ENCODE measurements at regions of chr2 and their contacts with region 1.

Region 1: DNA sequence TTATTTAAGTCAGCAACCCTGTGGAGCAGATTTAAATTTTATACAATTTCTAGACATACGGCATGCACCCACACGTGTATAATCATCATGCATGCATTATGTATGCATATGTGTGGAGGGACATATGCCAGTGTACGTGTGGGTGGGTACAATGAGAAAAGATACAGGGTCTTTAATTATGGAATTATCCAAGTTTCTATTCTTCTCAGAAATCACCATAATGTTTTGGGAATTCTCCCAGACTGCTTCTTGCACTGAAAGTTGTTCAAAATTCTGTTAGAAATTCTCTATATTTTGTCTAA is 63.9 kb upstream of the TMEM18 start:
- DNase-seq: no peak
- H3K4me3 ChIP-seq: peak overlapping the region; percentile 31 to 51 (median 47)
- H3K27ac ChIP-seq: no peak overlapping the region
- H3K4me1 ChIP-seq: peaks cover 6% of the 10 kb centered on the region
- H3K27me3 ChIP-seq: no peaks in the 10 kb centered on the region
- CTCF ChIP-seq: no peak

Region 2: DNA sequence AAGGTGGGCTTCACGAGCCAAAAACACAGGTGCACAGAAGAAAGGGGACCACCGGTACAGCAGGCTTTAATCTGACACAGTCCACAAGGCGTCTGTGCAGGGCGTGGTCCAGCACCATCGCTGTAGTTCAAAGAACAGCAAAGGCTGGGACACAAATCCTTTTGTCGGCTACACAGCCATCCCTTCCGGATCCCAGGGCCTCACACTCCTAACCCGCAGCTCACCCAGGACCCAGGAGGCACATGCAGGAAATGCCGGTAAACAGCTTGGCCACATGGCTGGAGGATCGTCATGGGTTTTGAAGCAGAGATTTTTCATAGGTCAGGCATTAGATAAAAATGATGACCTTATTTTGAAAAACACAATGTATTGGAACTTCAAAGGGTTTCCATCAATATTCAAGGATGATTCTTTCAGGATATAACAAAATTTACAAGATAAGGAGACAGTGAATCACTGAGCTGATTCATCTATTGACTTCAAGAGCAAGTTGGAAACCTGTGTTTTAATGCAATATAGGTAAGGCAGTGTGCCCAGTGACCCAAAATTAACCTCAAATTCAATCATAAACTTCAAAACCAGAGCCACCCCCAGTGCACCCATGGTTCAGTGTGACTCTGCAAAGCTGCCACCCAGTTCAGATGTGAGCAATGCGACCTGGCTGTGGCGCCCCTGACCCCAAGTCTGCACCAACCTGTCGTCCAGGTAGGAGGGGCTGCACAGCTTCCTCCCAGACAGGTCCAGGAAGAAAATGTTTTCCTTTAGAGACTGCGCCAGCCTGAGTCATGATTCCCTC is 138.4 kb before region 1 on chr2:
- CTCF ChIA-PET with region 1: no interaction called
- dilution Hi-C with region 1: no loop called
- in situ Hi-C with region 1: no loop called
- intact Hi-C with region 1: no loop called
- DNase-seq: no peak
- H3K4me3 ChIP-seq: no peak overlapping the region
- H3K27ac ChIP-seq: no peak overlapping the region
- H3K4me1 ChIP-seq: no peaks in the 10 kb centered on the region
- H3K27me3 ChIP-seq: no peaks in the 10 kb centered on the region
- CTCF ChIP-seq: no peak

Region 3: GRCh38 chr2:1324884-1325283 is 583.7 kb after region 1 on chr2:
- CTCF ChIA-PET with region 1: interaction called, 14 read pairs
- dilution Hi-C with region 1: no loop called
- in situ Hi-C with region 1: no loop called
- intact Hi-C with region 1: no loop called
- DNase-seq: no peak
- H3K4me3 ChIP-seq: no peak overlapping the region
- H3K27ac ChIP-seq: no peak overlapping the region
- H3K4me1 ChIP-seq: no peaks in the 10 kb centered on the region
- H3K27me3 ChIP-seq: no peaks in the 10 kb centered on the region
- CTCF ChIP-seq: no peak

Measured in mammary epithelial cell (primary cell).